GM10248 (cell line): ENCODE measurements at regions of chr16 and their contacts with region 1.

Region 1: GRCh38 chr16:68800257-68800875 is 43.0 kb upstream of the TANGO6 start:
- DNase-seq: peak; percentile 75
- CTCF ChIP-seq: peak; percentile 72

Region 2: DNA sequence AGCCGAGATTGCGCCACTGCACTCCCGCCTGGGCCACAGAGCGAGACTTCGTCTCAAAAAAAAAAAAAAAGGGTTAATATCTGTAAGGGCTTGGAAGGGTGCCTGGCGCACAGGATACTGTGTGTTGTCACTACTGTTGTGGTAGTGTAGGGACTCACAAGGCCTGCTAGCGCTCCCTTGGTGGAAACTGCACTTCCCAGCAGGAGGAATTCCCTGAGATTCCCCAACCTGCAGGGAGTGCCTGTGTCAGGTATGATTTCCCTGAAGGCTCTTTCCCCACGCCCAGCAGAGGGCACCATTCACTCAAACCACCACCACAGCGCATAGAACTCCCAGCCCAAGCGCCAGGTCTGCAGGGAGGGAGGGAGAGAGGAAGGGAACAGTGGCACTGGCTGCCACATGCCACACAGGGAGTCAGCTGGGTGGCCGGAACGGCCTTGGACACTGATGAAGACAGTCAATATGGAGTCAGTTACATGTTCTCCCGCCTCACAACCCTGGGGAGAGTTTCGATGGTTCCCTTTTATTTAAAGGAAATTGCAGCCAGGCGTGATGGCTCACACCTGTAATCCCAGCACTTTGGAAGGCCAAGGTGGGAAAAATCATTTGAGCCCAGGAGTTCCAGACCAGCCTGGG is 96.0 kb before region 1 on chr16:
- CTCF ChIA-PET with region 1: interaction called, 23 read pairs
- POLR2A ChIA-PET with region 1: no interaction called
- DNase-seq: peak; percentile 81
- CTCF ChIP-seq: peak; percentile 84

Region 3: GRCh38 chr16:68776821-68777351 is 23.5 kb before region 1 on chr16:
- CTCF ChIA-PET with region 1: interaction called, 11 read pairs
- POLR2A ChIA-PET with region 1: no interaction called
- DNase-seq: peak; percentile 39
- CTCF ChIP-seq: no peak

Region 4: DNA sequence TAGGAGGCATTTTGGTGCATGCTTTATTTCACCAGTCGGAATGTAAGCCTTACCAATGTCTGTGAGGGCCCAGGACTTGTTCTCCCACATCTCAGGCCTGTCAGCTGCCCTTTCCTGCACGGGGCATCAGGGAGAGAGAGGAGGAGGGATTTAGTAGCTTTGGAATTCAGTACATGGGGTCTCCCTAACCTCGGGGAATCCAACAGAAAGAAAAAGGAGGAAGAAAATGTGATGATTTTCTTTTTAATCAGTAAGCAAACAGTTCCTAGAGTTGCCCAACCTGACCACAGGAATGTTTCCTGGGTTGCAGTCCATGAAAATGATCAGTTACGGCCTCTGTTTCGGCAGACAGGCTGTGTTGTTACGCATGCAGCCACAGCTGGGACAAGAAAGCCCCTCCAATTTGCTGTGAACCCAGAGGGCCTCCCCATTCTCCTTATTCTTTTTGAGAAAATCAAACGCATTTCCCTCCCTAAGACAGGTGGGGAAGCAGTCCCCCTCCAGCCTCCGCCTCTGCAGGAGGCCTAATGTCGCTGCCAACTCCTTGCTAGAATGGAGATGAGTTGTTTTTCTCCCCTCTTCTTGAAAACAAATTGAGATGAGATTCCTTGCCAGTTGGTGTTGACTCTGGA is 10.1 kb before region 1 on chr16:
- CTCF ChIA-PET with region 1: interaction called, 13 read pairs
- POLR2A ChIA-PET with region 1: no interaction called
- DNase-seq: no peak
- CTCF ChIP-seq: no peak

Region 5: DNA sequence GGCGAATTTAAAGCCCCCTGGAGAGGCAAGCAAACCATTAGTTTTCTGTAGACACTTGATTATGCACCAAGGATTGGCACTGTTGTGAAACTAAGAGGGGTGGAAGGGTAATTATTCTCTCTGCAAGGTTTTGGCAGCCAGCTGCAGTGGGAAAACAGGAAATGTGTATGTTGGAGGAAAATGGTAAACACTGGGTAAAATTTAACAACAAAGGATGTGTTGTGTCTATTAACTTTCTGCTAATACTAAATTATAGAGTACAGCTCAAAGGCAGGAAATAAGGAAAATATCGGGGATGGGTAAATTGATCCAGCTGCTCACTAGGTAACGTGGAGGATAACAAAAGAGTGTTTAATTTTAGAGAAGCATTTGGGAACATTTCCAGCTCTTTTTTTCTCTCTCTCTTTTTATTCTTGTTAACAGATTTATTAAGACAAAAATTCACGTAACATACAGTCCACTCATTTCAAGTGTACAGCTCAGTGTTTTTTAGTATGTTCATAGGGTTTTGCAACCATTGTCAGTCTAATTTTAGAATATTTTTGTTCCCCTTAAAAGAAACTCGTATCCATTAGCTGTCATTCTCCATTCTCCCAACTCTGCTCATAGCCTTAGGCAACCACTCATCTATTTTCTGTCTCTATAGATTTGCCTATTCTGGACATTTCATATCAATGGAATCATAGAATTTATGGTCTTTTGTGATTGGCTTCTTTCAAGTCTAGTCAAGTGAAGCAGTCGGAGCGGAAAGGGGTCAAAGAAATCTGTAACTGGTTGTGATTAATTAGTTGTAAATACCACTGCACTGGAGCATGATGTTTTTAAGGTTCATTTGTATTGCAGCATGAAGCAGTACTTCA is 84.7 kb after region 1 on chr16:
- CTCF ChIA-PET with region 1: no interaction called
- POLR2A ChIA-PET with region 1: no interaction called
- DNase-seq: no peak
- CTCF ChIP-seq: no peak